ENCODE measurements at regions of chr2 and their contacts with region 1.

Region 1: GRCh38 chr2:12293874-12294273 is 422.9 kb upstream of the TRIB2 start:
- DNase-seq: peak; percentile 15
- H3K4me3 Mint-ChIP-seq: no peak overlapping the region
- H3K27ac Mint-ChIP-seq: peak overlapping the region; percentile 64
- H3K4me1 Mint-ChIP-seq: peaks cover 54% of the 10 kb centered on the region
- H3K27me3 Mint-ChIP-seq: peaks cover 18% of the 10 kb centered on the region

Region 2: DNA sequence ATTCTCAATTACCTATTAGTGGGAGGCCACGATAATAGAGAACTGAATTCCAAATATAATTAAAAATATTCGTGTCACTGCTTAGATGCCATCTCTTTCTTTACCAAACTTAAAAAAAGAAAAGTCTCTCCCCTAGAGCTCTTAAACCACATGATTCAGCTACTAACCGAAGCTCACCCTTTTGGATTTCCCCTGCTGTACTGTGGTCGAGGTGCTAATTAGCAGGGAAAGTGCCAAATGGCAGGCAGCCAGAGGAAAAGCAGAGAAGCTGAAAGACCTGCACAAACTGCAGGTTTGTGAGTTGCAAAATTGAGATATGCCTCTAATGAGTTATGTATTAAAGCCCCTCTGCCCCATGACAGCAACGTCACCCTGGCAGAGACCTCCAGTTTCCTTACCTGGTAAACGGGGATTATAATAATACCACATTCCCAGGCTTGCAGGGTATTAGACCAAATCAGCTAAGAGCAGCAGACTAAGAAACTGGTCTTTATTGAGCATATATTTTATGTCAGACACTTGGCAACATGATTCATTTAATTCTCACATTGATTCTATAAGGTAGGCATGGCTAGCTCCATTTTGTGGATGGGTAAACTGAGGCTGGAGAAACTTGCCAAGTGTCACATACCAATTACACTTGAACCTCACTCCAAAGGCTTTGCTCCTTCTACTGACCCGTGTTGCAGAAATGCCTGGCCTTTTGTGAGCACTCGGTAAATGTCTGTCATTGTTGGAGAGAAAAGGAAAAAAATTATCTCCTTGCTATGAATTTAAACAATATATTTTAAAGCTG is 287.8 kb before region 1 on chr2:
- intact Hi-C with region 1: loop called (anchors 5 kb)
- DNase-seq: peak; percentile 24
- H3K4me3 Mint-ChIP-seq: no peak overlapping the region
- H3K27ac Mint-ChIP-seq: no peak overlapping the region
- H3K4me1 Mint-ChIP-seq: peaks cover 10% of the 10 kb centered on the region
- H3K27me3 Mint-ChIP-seq: peaks cover 40% of the 10 kb centered on the region

Region 3: DNA sequence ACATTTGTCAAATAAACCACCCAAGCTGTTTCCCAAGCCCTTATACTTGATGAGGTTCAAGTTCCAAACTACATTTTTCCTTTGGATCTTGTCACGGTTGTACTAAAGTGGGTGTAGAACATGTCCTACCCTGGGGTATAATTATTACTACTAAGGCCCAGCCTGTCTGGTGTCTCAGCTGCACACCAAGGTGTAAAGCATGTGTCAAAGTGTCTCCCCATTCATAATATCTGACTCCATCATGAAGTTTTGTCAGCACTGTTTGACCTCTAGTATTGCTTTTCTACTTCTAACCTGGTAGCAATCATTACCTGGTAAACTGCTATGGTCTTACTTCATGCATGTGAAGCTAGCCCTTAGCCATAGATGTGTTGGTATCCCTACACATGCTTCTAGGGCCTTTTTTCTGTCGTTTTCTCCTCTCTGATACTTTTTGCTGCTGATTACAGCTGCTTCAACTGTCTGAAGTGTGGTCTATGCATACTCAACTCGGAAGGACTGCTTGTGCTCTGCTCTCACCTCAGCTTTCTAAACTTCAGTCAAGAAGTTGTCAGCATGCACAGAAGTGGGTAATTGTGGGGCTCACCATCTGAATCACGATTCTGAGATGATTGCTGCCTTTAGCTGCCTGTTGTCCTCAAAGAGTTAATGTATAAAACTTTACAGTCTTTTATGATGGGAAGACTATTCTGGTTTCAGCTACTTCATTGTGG is 22.8 kb before region 1 on chr2:
- intact Hi-C with region 1: loop called (anchors 1 kb)
- DNase-seq: no peak
- H3K4me3 Mint-ChIP-seq: peak overlapping the region; percentile 39
- H3K27ac Mint-ChIP-seq: peak overlapping the region; percentile 4
- H3K4me1 Mint-ChIP-seq: peaks cover 27% of the 10 kb centered on the region
- H3K27me3 Mint-ChIP-seq: peaks cover 18% of the 10 kb centered on the region

Region 4: DNA sequence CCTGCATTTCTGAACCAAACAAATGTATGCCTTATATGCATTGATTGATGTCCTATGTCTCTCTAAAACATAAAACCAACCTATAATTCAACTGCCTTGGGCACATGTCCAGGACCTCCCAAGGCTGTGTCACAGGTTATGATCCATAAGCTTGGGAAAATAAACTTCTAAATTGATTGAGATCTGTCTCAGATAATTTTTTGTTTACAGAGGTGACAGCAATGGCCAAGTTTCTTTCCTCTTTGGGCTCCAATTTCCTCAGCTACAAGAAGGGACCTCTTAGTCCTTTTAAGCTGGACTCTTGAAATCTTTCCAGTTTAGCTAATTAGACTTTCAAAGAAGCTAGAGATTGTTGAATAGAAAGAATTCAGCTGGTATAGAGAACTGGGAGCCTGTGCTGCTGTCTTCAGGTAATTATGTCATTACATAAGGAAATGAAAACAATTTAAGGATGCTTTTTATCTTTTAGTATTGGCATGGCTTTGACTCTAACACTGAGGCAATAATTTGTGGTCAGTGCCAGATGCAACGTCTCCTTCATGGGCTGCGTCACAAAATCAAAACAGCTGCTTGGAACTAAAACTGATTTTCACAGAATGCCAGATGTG is 10.8 kb after region 1 on chr2:
- intact Hi-C with region 1: no loop called
- DNase-seq: no peak
- H3K4me3 Mint-ChIP-seq: no peak overlapping the region
- H3K27ac Mint-ChIP-seq: no peak overlapping the region
- H3K4me1 Mint-ChIP-seq: peaks cover 48% of the 10 kb centered on the region
- H3K27me3 Mint-ChIP-seq: peaks cover 15% of the 10 kb centered on the region

Region 5: DNA sequence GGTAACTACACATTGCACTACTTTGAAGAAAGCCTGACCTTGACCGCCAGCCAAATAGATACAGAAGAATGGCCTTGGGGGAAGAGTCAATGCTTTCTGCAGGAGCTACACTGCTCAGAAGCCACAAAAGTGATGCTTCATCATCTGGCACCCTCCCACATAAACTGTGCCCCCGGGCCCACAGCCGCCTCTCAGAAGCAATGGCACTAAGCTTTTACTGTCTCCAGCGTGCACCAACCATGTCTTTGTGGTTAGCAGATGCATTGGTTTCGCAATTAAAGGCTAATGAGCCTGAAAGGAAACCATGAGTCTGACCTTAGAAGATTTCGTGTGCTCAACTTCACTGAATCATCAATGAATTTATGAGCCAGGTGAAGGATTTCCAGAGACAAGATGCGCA is 213.4 kb after region 1 on chr2:
- intact Hi-C with region 1: loop called (anchors 2 kb)
- DNase-seq: peak; percentile 43
- H3K4me3 Mint-ChIP-seq: no peak overlapping the region
- H3K27ac Mint-ChIP-seq: peak overlapping the region; percentile 13
- H3K4me1 Mint-ChIP-seq: peaks cover 71% of the 10 kb centered on the region
- H3K27me3 Mint-ChIP-seq: no peaks in the 10 kb centered on the region

Region 6: DNA sequence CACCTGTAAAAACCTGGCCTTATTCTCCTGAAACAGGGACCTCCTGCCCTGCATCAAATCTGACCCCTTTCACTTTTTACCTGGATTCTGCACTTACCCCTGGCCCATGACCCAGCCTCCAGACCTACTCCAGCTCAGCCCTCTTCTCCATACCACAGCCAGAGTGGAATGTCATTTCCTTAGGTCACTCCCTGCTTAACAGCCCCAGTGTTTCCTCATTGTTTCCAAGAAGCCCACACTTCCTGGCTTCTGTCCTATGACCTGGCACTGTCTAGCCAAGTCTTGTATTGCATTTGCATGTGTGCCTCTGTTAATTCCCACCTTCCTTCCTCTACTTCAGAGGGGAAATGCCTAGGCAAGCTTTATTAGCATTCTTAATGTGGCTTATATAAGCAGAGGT is 371.5 kb after region 1 on chr2:
- intact Hi-C with region 1: no loop called
- DNase-seq: no peak
- H3K4me3 Mint-ChIP-seq: no peak overlapping the region
- H3K27ac Mint-ChIP-seq: no peak overlapping the region
- H3K4me1 Mint-ChIP-seq: no peaks in the 10 kb centered on the region
- H3K27me3 Mint-ChIP-seq: peaks cover 11% of the 10 kb centered on the region

Region 7: DNA sequence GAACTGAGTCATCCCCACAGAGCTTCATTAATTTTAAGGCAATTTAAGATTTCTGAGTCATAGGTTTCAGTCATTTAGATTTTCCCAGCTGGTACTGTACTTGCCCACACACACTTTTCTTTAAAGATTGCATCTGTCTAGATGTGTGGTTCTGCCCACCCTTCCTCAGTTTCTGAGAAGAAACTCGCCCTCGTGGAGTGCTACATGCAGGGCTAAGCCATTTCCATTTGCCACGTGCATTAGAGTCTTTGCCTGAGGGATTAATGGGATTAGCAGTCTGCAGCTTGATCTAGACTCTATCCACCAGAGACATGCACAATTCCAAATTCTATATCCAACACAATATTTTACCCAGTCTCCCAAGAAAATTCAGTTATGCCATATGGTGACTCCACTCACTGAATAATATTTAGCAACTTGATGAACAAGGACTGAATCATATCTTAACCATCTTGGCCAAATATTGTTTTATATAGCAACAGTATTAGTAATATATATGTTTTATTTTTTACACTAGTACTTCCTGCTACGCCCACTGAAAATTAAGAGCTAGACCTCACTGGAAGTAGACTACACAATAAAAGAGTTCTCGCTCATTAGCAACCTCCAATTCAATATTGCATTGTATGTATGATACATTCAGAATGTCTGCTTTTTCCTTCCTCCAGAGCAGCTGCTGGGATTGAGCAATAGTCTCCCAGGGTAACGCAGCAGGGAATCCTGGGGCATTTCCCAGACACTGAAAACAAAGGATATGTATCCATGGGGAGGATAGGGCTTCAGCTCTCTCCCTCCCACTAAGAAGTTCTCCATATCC is 408.6 kb after region 1 on chr2:
- intact Hi-C with region 1: loop called (anchors 5 kb)
- DNase-seq: no peak
- H3K4me3 Mint-ChIP-seq: no peak overlapping the region
- H3K27ac Mint-ChIP-seq: no peak overlapping the region
- H3K4me1 Mint-ChIP-seq: peaks cover 27% of the 10 kb centered on the region
- H3K27me3 Mint-ChIP-seq: peaks cover 36% of the 10 kb centered on the region

Region 8: GRCh38 chr2:12856934-12857601 is 563.2 kb after region 1 on chr2:
- intact Hi-C with region 1: loop called (anchors 5 kb)
- DNase-seq: peak; percentile 28
- H3K4me3 Mint-ChIP-seq: no peak overlapping the region
- H3K27ac Mint-ChIP-seq: no peak overlapping the region
- H3K4me1 Mint-ChIP-seq: peaks cover 20% of the 10 kb centered on the region
- H3K27me3 Mint-ChIP-seq: peaks cover 3% of the 10 kb centered on the region

Measured in activated T-helper 2 cell treated with anti-CD3 and anti-CD28 coated beads, Interferon-gamma antibody, Interleukin-2, Interleukin-4, amounts not matched to agents 10 μg/mL and 5 μg/mL and 100 μg/mL, durations not matched to agents 14 hours and 24 hours and 36 hours (primary cell).